ENCODE measurements at regions of chr1 and their contacts with region 1.

Region 1: GRCh38 chr1:156892190-156893047 is 1.1 kb upstream of the PEAR1 start:
- DNase-seq: peak; percentile 83
- H3K27ac ChIP-seq: peak overlapping the region; percentile 99
- CTCF ChIP-seq: peak; percentile 92

Region 2: GRCh38 chr1:156767101-156767878 is 125.1 kb before region 1 on chr1 and contains the start of gene PRCC:
- CTCF ChIA-PET with region 1: no interaction called
- POLR2A ChIA-PET with region 1: no interaction called
- DNase-seq: peak; percentile 94
- H3K27ac ChIP-seq: peak within 1 kb of the TSS; percentile 87
- CTCF ChIP-seq: no peak

Region 3: DNA sequence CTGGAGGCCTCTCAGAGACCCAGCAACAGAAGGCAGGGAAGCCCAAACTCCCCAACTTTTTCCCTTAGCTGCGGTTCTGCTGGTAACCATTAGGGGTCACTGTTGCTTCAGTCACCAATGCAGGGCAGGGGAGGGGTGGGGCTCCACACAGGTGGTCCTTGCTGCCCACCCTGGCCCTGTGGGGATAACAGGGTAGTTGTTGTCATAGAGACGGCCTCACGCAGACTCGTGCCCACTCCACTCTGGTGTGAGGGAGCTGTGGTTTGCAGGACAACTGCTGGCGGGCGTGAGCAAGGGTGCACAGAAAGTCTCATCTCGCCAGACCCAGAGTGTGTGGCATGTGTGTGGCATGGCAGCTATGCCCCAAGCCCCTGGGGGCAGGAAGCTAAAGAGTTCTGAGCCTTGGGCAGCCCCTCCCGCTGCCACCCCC is 53.4 kb before region 1 on chr1:
- CTCF ChIA-PET with region 1: interaction called, 10 read pairs
- POLR2A ChIA-PET with region 1: no interaction called
- DNase-seq: no peak
- H3K27ac ChIP-seq: no peak overlapping the region
- CTCF ChIP-seq: peak; percentile 83

Region 4: DNA sequence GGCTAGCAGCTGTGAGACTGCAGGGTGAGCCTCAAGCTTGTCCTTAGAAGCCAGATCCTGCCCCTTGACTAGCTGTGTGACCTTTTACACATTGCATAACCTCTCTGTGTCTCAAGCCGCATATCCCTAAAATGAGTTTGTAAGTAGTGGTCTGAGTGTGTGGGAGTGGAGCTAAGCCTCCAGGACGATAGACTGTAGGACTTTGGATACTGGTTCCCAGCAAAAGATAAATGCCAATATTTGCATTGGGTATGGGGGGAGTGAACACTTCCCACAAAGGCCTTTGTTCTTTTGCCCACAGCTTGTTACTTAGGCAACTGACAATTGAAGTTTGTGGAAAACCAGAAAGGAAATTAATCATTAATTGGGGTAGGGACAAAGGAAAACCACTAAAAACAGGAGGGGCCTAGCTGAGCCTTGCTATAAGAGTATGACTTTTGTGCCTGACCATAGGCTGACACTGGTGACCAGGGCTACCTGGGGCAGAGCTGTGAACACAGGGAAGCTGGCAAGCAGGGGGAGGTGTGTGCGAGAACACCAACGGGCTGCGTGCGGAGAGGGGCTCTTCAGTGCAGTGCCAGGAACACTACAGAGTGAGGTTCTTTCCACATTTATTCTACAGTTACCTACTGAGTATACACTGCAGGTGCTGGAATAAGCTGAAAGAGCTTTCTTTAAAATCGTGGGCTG is 348.2 kb after region 1 on chr1:
- CTCF ChIA-PET with region 1: no interaction called
- POLR2A ChIA-PET with region 1: no interaction called
- DNase-seq: no peak
- H3K27ac ChIP-seq: no peak overlapping the region
- CTCF ChIP-seq: no peak